ENCODE measurements at regions of chr2 and their contacts with region 1.

Region 1: DNA sequence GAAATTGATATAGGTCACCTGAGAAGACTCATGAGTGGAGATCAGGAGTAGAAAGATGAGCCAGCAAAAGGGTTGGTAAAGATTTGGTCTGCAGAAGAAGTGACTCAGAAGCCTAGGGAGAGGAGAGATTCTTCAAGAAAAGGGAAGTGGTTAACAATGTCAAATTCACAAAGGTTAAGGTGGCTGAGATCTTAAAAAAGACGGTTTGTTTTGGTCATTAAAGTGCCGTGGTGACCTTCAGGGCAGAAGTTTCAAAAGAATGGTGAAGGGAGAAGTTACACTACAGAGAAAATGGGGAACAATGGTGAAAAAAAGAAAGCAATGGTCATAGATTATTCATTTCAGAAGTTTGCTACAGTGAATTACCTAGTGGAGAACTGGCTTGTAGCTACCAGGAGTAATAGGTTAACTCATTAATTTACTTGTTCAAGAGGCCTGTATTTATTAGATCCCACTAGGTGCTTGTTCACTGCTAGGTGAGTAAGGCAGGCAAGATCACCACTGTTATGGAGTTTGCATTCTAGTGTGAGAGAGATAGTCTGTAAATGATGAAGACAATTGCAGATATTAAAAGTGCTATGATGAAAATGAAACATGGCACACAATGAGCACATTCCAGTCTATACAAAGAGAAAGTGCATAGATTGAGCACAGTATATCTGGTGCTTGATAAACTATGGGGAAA is 43.0 kb downstream of the FBXO48 start:
- DNase-seq: no peak
- H3K4me3 Mint-ChIP-seq: no peak overlapping the region
- H3K27ac Mint-ChIP-seq: no peak overlapping the region
- H3K4me1 Mint-ChIP-seq: peaks cover 18% of the 10 kb centered on the region
- H3K27me3 Mint-ChIP-seq: no peaks in the 10 kb centered on the region

Region 2: DNA sequence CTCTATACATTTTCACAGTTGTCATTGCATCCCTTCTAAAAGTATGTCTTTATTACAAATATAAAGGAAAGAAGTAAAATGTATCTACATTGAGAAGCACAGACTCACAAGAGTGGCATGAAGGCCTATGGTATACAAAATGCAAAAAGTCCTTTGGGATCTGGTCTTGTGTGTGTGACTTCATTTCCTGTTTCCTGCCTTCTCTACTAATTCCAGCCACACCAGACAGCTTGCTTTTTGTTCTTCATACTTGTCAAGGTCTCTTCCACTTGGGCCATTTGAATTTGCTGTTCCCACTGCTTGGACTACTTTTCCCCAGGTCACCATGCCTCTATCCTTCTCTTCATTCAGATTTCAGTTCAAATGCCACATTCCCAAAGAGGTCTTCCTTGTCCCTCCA is 273.1 kb before region 1 on chr2:
- CTCF ChIA-PET with region 1: no interaction called
- POLR2A ChIA-PET with region 1: no interaction called
- intact Hi-C with region 1: no loop called
- DNase-seq: no peak
- H3K4me3 Mint-ChIP-seq: no peak overlapping the region
- H3K27ac Mint-ChIP-seq: no peak overlapping the region
- H3K4me1 Mint-ChIP-seq: peaks cover 29% of the 10 kb centered on the region
- H3K27me3 Mint-ChIP-seq: no peaks in the 10 kb centered on the region

Region 3: DNA sequence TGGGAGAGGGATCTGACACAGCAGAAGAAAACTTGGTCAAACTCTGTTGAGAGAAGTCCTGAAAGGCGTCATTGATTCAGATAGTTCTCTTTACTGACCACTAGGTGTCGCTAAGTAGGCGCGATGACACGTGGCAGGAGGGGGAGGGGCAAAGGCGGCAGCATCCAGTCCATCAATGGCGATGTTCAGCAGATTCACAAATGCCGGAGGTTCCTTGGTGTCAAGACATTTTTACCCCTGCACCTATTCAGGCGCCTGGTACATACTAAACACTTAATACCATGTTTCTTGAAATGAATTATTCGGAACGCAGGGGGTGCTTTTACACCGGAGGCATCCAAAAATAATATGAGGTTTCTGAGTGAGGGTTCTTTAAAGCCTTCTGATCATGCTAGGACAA is 62.0 kb before region 1 on chr2:
- CTCF ChIA-PET with region 1: interaction called, 4 read pairs
- POLR2A ChIA-PET with region 1: no interaction called
- intact Hi-C with region 1: loop called (anchors 1 kb)
- DNase-seq: peak; percentile 87
- H3K4me3 Mint-ChIP-seq: peak overlapping the region; percentile 48
- H3K27ac Mint-ChIP-seq: no peak overlapping the region
- H3K4me1 Mint-ChIP-seq: peaks cover 12% of the 10 kb centered on the region
- H3K27me3 Mint-ChIP-seq: no peaks in the 10 kb centered on the region

Region 4: GRCh38 chr2:68371581-68371980 is 52.5 kb before region 1 on chr2:
- CTCF ChIA-PET with region 1: no interaction called
- POLR2A ChIA-PET with region 1: no interaction called
- intact Hi-C with region 1: loop called (anchors 2 kb)
- DNase-seq: no peak
- H3K4me3 Mint-ChIP-seq: no peak overlapping the region
- H3K27ac Mint-ChIP-seq: no peak overlapping the region
- H3K4me1 Mint-ChIP-seq: peaks cover 19% of the 10 kb centered on the region
- H3K27me3 Mint-ChIP-seq: peaks cover 2% of the 10 kb centered on the region

Region 5: DNA sequence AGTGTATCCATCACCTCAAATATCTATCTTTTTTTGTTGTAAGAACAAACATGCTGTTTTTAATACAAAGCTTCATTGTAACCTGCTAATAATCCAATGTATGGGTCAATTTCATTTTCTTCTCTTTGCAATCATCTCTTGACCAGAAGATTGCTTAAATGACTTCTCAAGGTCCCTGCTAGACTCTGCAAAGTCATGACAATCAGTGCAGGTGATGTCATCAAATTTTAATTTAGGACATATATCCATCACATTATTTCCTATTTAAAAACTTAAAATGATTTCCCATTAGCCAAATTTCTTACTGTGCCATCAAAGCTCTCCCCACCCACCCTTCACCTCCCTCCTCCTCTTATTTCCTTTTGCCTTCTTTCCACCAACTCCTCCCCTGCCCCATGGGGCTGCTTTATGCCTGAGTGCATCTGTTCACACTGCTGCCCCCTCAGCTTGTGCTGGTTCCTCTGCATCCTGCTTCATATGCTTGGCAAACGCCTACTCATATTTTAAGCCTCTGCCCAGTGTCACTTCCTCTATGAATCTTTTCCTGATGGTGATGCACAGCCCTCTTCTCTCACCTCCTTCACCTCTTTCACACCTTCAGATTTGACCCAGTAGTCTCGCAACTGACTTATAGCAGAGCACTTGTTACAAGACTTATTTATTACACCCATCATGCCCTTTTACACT is 38.7 kb before region 1 on chr2:
- CTCF ChIA-PET with region 1: interaction called, 3 read pairs
- POLR2A ChIA-PET with region 1: interaction called, 3 read pairs
- intact Hi-C with region 1: loop called (anchors 1 kb)
- DNase-seq: peak; percentile 62
- H3K4me3 Mint-ChIP-seq: no peak overlapping the region
- H3K27ac Mint-ChIP-seq: no peak overlapping the region
- H3K4me1 Mint-ChIP-seq: peaks cover 41% of the 10 kb centered on the region
- H3K27me3 Mint-ChIP-seq: no peaks in the 10 kb centered on the region